Right ventricle myocardium superior (tissue), 1 donor: ENCODE measurements at regions of chr18 and their contacts with region 1.

Region 1: DNA sequence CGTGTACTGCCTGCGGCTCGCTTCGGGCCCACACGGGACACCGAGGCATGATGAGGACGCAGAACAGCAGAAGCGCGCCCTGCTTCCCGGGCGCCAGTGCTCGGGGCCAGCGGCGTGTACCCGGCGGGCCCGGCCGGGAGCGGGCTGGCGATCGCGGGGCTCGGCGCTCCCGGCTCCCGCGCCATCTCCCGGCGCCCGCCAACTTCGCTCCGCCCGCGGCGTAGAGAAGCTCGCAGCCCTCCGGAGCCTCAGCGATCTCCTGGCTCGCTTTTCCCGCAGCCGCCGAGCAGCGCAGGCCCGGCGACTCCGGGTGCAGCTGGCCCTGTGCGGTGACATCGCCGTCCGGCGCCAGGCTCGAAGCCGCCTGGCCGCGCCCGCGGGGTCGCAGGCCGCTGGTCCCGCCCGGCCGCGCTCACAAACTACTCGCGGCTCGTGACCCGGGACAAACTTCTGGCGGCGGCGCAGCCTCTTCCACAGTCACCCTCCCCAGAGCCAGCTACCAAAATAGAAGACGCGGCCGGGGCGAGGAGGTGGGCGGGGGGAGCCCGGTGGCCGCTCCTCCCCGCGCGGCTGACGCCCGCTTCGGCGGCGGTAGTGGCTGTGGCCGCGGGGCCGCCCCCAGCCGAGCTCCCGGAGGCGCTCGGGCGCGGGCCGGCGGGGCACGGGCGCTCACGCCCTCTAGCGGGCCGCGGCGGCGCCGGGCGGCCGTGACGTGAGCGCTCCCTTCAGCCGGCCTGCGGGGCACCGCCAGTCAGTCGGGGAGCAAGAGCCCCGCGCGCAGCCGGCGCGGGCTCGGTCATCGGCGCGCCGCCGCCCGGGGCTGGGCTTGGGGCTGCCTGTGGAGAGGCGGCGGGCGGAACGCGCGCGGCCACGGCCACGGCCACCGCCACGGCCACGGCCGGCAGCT is at the start of gene PTPRM:
- DNase-seq: peak; percentile 95
- ATAC-seq: peak; percentile 93
- total RNA-seq, gene PTPRM: 101 TPM

Region 2: GRCh38 chr18:6941996-6942395 is 624.8 kb before region 1 on chr18:
- intact Hi-C with region 1: no loop called
- DNase-seq: no peak
- ATAC-seq: no peak

Region 3: DNA sequence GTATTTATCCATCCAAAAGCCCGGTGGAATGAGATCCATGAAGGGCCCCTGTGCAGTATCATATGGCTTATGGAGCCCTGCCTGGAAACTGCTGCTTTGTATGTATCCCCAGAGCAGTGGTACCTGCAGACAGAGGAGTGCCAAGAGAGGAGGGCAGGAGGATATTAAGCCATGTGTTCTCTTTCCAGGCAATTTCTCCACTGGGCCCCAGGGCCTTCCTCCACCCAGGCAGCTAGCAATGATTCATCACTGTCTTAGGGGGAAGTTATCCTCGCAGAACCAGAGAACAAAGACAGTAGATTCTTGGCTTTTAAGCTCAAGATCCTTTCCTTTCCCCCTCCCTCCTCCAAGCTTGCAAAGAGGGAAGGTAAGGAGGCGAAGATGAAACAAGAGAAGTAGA is 237.8 kb before region 1 on chr18:
- intact Hi-C with region 1: no loop called
- DNase-seq: no peak
- ATAC-seq: no peak

Region 4: GRCh38 chr18:7370802-7371201 is 196.0 kb before region 1 on chr18:
- intact Hi-C with region 1: loop called (anchors 5 kb)
- DNase-seq: peak; percentile 84
- ATAC-seq: peak; percentile 81

Region 5: GRCh38 chr18:7459851-7460770 is 106.7 kb before region 1 on chr18:
- intact Hi-C with region 1: loop called (anchors 5 kb)
- DNase-seq: peak; percentile 72
- ATAC-seq: peak; percentile 80

Region 6: DNA sequence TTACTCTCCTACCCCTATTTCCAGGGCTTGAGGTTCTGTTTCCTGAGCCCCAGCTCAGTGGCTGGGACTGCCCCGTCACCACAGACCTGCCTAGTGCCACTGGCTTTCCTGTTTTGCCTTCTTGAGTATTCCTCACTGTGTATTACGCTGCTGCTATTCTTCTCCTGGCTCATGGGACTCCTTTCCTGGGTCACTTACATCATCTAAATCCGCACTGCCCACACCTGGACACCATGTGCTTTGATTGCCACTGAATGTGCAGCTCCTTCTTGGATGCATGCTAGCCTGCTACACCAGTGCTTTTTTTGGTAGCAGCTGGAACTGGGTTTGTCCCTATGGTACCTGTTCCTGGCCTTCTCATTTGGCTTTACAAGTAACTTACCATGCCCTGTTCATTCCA is 96.3 kb before region 1 on chr18:
- intact Hi-C with region 1: no loop called
- DNase-seq: no peak
- ATAC-seq: no peak

Region 7: DNA sequence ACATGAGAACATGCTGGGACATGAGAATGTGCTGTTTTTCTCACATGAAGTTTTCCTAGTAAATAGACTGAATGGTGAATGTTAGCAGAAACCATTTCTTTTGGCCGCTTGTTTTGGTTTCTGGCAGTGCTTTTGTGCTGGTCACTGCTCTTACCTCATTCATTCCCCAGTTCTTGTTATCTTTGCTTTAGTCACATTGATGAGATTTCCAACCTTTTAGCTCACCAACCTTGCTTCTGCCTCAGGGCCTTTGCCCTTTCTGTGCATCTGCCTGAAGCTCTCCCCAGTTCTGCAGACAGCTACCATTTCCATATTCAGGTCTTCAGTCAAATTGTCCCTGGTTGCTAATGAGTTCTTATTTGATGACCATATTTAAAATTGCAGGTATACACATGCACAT is 91.9 kb after region 1 on chr18:
- intact Hi-C with region 1: no loop called
- DNase-seq: no peak
- ATAC-seq: no peak